B cell (primary cell): ENCODE measurements at regions of chr2 and their contacts with region 1.

Region 1: GRCh38 chr2:234425619-234426603 is 71.0 kb downstream of the ARL4C start:
- DNase-seq: peak; percentile 94
- ATAC-seq: peak; percentile 92
- H3K4me3 ChIP-seq: peak overlapping the region in 2 of 5 experiments; percentile 5 to 37
- H3K4me3 Mint-ChIP-seq: peak overlapping the region; percentile 69
- H3K27ac ChIP-seq: peak overlapping the region; percentile 87
- H3K27ac Mint-ChIP-seq: peak overlapping the region; percentile 95
- H3K4me1 ChIP-seq: peaks cover 79 to 85% of the 10 kb centered on the region in 2 donors
- H3K4me1 Mint-ChIP-seq: peaks cover 73% of the 10 kb centered on the region
- H3K27me3 ChIP-seq: no peaks in the 10 kb centered on the region
- H3K27me3 Mint-ChIP-seq: no peaks in the 10 kb centered on the region
- CTCF ChIP-seq: no peak

Region 2: DNA sequence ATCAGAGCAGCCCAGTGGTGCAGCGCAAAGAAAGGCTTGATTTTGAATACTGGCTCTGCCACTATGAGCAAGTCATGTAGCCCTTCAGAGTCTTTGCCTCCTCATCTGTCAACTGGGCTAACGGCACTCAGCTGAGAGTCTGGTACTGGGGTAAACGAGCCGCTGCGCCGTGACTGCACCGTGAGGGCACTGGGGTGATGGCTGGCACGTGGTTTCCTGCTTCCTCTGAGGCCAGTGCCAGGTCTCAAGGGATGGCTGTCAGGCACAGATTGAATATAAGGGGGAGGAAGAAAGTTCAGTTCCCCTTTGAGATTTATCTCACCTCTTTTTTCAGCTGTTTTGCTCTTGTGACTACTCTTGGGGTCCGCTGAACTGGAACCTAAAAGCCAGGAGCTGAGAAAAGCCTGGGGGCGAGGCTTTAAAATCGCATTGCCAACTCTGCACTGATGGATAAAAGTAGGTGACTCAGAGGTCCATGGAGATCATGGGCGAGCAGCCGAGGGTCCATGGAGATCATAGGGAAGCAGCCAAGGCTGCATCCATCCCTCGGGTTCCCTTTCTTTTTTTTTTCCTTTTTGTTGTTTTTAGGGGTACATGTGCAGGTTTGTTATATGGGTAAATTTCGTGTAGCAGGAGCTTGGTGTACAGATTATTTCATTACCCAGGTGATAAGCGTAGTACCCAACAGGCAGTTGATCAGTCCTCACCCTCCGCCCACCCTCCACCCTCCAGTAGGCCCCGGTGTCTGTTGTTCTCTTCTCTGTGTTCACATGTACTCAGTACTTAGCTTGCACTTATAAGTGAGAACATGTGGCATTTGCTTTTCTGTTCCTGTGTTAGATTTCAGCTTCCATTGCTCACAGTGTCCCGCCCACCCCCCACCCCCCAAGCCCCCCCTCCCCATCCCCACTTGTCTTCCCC is 261.2 kb before region 1 on chr2:
- CTCF ChIA-PET with region 1: no interaction called
- POLR2A ChIA-PET with region 1: no interaction called
- intact Hi-C with region 1: loop called (anchors 1 kb)
- DNase-seq: peak; percentile 94
- ATAC-seq: peak; percentile 96
- H3K4me3 ChIP-seq: peak overlapping the region in 2 of 5 experiments; percentile 11 to 40
- H3K4me3 Mint-ChIP-seq: peak overlapping the region; percentile 71
- H3K27ac ChIP-seq: peak overlapping the region; percentile 87 to 88
- H3K27ac Mint-ChIP-seq: peak overlapping the region; percentile 89
- H3K4me1 ChIP-seq: peaks cover 45 to 54% of the 10 kb centered on the region in 2 donors
- H3K4me1 Mint-ChIP-seq: peaks cover 55% of the 10 kb centered on the region
- H3K27me3 ChIP-seq: peaks cover 0 to 8% (median 2%) of the 10 kb centered on the region in 4 experiments
- H3K27me3 Mint-ChIP-seq: peaks cover 9% of the 10 kb centered on the region
- CTCF ChIP-seq: no peak

Region 3: GRCh38 chr2:234411793-234412192 is 14.1 kb before region 1 on chr2:
- CTCF ChIA-PET with region 1: interaction called, 6 read pairs
- POLR2A ChIA-PET with region 1: interaction called, 4 read pairs
- intact Hi-C with region 1: loop called (anchors 1 kb)
- DNase-seq: peak; percentile 64
- ATAC-seq: peak; percentile 79
- H3K4me3 ChIP-seq: peak overlapping the region in 1 of 5 experiments; percentile 8
- H3K4me3 Mint-ChIP-seq: peak overlapping the region; percentile 23
- H3K27ac ChIP-seq: no peak overlapping the region
- H3K27ac Mint-ChIP-seq: peak overlapping the region; percentile 38
- H3K4me1 ChIP-seq: peaks cover 40 to 42% of the 10 kb centered on the region in 2 donors
- H3K4me1 Mint-ChIP-seq: peaks cover 54% of the 10 kb centered on the region
- H3K27me3 ChIP-seq: no peaks in the 10 kb centered on the region
- H3K27me3 Mint-ChIP-seq: no peaks in the 10 kb centered on the region
- CTCF ChIP-seq: no peak

Region 4: DNA sequence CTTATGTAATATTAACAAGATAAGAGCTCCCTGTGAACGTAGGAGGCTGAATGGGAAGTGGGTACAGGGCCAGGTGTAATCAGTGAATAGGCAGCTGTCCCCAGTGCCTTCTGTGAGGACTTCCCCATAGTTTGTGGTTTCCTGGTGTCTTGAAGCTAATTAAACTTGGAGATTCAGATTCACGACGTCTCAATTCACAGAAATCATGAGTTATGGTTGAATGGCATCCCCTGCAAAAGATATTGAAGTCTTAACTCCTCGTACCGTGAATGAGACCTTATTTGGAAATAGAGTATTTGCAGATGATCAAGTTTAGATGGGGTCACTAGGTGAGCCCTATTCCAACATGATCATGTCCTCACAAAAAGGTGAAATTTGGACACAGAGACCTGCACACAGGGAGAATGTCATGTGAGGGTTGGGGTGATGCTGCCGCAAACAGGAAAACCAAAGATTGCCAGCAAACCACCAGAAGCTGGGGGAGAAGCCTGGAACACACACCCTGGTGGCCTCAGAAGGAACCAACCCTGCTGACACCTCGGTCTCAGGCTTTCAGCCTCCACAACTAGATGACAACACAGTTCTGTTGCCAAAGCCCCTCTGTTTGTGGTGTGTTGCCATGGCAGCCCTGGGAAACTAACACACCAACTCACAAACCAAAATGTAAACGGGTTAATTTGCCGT is 57.8 kb after region 1 on chr2:
- CTCF ChIA-PET with region 1: interaction called, 9 read pairs
- POLR2A ChIA-PET with region 1: interaction called, 4 read pairs
- intact Hi-C with region 1: loop called (anchors 1 kb)
- DNase-seq: peak; percentile 90
- ATAC-seq: peak; percentile 87
- H3K4me3 ChIP-seq: peak overlapping the region in 1 of 5 experiments; percentile 27
- H3K4me3 Mint-ChIP-seq: peak overlapping the region; percentile 61
- H3K27ac ChIP-seq: peak overlapping the region; percentile 48 to 59
- H3K27ac Mint-ChIP-seq: peak overlapping the region; percentile 33
- H3K4me1 ChIP-seq: peaks cover 45 to 50% of the 10 kb centered on the region in 2 donors
- H3K4me1 Mint-ChIP-seq: peaks cover 41% of the 10 kb centered on the region
- H3K27me3 ChIP-seq: peaks cover 0 to 4% (median 0%) of the 10 kb centered on the region in 4 experiments
- H3K27me3 Mint-ChIP-seq: no peaks in the 10 kb centered on the region
- CTCF ChIP-seq: peak; percentile 71